ENCODE measurements at regions of chr7 and their contacts with region 1.

Region 1: DNA sequence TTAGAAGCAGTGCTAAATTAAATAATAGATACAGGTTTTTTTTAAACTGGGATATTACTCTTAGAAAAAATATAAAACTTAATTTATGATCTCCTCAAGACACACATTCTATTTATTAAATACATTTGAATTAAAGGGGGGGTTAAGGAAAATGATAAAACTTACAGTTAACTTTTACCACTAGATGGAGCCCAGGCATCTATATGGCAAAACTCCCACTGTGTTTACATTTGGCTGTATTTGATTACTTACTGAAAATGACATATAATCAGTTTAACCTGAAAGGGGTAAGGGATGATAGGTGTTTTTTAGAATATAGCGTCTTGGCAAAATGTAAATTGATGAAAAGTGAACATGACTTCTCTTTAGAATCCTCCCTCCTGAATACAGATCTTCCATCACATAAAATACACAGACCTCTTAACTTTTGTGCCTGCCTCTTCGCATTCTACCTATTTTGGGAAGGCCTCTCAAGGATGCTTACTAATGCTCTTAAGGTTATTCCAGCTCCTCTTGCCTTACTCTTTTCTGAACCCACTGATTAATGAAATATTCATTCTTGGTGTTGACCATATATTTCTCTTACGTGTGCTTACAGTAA is 235.7 kb downstream of the AGMO start:
- DNase-seq: no peak
- H3K4me3 ChIP-seq: no peak overlapping the region
- H3K27ac ChIP-seq: no peak overlapping the region
- H3K4me1 ChIP-seq: no peaks in the 10 kb centered on the region
- H3K27me3 ChIP-seq: no peaks in the 10 kb centered on the region
- CTCF ChIP-seq: peak; percentile 30

Region 2: GRCh38 chr7:15245831-15246230 is 80.3 kb before region 1 on chr7:
- intact Hi-C with region 1: no loop called
- DNase-seq: no peak
- H3K4me3 ChIP-seq: no peak overlapping the region
- H3K27ac ChIP-seq: no peak overlapping the region
- H3K4me1 ChIP-seq: no peaks in the 10 kb centered on the region
- H3K27me3 ChIP-seq: no peaks in the 10 kb centered on the region
- CTCF ChIP-seq: no peak

Region 3: GRCh38 chr7:15370441-15370840 is 44.3 kb after region 1 on chr7:
- intact Hi-C with region 1: no loop called
- DNase-seq: no peak
- H3K4me3 ChIP-seq: no peak overlapping the region
- H3K27ac ChIP-seq: no peak overlapping the region
- H3K4me1 ChIP-seq: no peaks in the 10 kb centered on the region
- H3K27me3 ChIP-seq: no peaks in the 10 kb centered on the region
- CTCF ChIP-seq: no peak

Region 4: GRCh38 chr7:15720849-15721471 is 394.8 kb after region 1 on chr7:
- intact Hi-C with region 1: loop called (anchors 2 kb)
- DNase-seq: peak; percentile 43
- H3K4me3 ChIP-seq: no peak overlapping the region
- H3K27ac ChIP-seq: no peak overlapping the region
- H3K4me1 ChIP-seq: no peaks in the 10 kb centered on the region
- H3K27me3 ChIP-seq: no peaks in the 10 kb centered on the region
- CTCF ChIP-seq: peak; percentile 75